ENCODE measurements at regions of chr10 and their contacts with region 1.

Region 1: GRCh38 chr10:123139521-123140163 is 3.9 kb downstream of the HMX3 start:
- DNase-seq: no peak
- ATAC-seq: peak; percentile 6; the same call in 1 of the 3 replicates
- H3K4me3 ChIP-seq: peak overlapping the region; percentile 61
- H3K27ac ChIP-seq: no peak overlapping the region; the same call in 1 of the 2 replicates
- H3K4me1 ChIP-seq: peaks cover 4% of the 10 kb centered on the region; the same call in 1 of the 2 replicates
- H3K27me3 ChIP-seq: peaks cover 20 to 21% of the 10 kb centered on the region in 2 experiments; a peak in 3 of 4 replicates
- CTCF ChIP-seq: no peak
- EP300 ChIP-seq: no peak
- POLR2A ChIP-seq: 0 out of 2 replicates have a peak, but pooled peaks have one; percentile 23
- RAD21 ChIP-seq: no peak

Region 2: GRCh38 chr10:123559066-123559822 is 419.6 kb after region 1 on chr10:
- CTCF ChIA-PET with region 1: interaction called, 33 read pairs
- POLR2A ChIA-PET with region 1: no interaction called
- RAD21 ChIA-PET with region 1: interaction called, 20 read pairs
- SMC1A ChIA-PET with region 1: interaction called, 10 read pairs
- in situ Hi-C with region 1: loop called (anchors 5 kb)
- intact Hi-C with region 1: no loop called
- DNase-seq: no peak
- ATAC-seq: peak; percentile 91
- H3K4me3 ChIP-seq: no peak overlapping the region
- H3K27ac ChIP-seq: peak overlapping the region; percentile 18; the same call in 1 of the 2 replicates
- H3K4me1 ChIP-seq: peaks cover 45% of the 10 kb centered on the region
- H3K27me3 ChIP-seq: no peaks in the 10 kb centered on the region; a peak in 1 of 4 replicates
- CTCF ChIP-seq: peak; percentile 84 to 98 (median 98)
- EP300 ChIP-seq: no peak
- POLR2A ChIP-seq: no peak
- RAD21 ChIP-seq: peak; percentile 100

Measured in GM12878 (cell line).